ENCODE measurements at regions of chr2 and their contacts with region 1.

Region 1: GRCh38 chr2:42095923-42096408 is 48.1 kb downstream of the PKDCC start:
- DNase-seq: peak; percentile 88
- ATAC-seq: peak; percentile 68
- H3K4me3 Mint-ChIP-seq: no peak overlapping the region
- H3K27ac Mint-ChIP-seq: no peak overlapping the region
- H3K4me1 Mint-ChIP-seq: peaks cover 21% of the 10 kb centered on the region
- H3K27me3 Mint-ChIP-seq: no peaks in the 10 kb centered on the region
- CTCF ChIP-seq: peak; percentile 89

Region 2: GRCh38 chr2:42132966-42133641 is 37.1 kb after region 1 on chr2:
- CTCF ChIA-PET with region 1: interaction called, 18 read pairs
- POLR2A ChIA-PET with region 1: no interaction called
- intact Hi-C with region 1: no loop called
- DNase-seq: peak; percentile 97
- ATAC-seq: peak; percentile 91
- H3K4me3 Mint-ChIP-seq: peak overlapping the region; percentile 75
- H3K27ac Mint-ChIP-seq: peak overlapping the region; percentile 97
- H3K4me1 Mint-ChIP-seq: peaks cover 78% of the 10 kb centered on the region
- H3K27me3 Mint-ChIP-seq: no peaks in the 10 kb centered on the region
- CTCF ChIP-seq: no peak

Region 3: DNA sequence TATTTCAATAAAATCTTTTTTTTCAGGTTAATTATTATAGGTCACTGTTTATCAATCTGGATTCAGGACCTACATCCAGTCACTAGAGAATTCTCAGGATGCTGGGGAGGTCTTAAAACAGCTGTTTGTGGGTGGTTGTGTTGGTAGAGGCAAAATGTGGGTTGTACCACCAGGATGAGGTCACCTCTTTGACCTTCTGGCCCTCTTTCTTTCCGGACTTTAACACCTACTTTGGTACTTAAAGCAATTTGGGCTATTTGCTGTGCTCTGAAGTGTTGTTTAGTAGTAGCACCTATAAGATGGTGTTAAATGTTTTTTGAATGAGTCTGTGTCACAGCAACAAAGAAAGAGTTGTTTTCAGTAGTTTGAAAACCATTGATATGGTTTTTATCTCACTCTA is 87.8 kb after region 1 on chr2:
- CTCF ChIA-PET with region 1: interaction called, 13 read pairs
- POLR2A ChIA-PET with region 1: interaction called, 3 read pairs
- intact Hi-C with region 1: no loop called
- DNase-seq: no peak
- ATAC-seq: peak; percentile 56
- H3K4me3 Mint-ChIP-seq: no peak overlapping the region
- H3K27ac Mint-ChIP-seq: no peak overlapping the region
- H3K4me1 Mint-ChIP-seq: peaks cover 66% of the 10 kb centered on the region
- H3K27me3 Mint-ChIP-seq: no peaks in the 10 kb centered on the region
- CTCF ChIP-seq: no peak

Region 4: GRCh38 chr2:42196403-42197267 is 100.7 kb after region 1 on chr2:
- CTCF ChIA-PET with region 1: interaction called, 55 read pairs
- POLR2A ChIA-PET with region 1: interaction called, 3 read pairs
- intact Hi-C with region 1: loop called (anchors 2 kb)
- DNase-seq: peak; percentile 46
- ATAC-seq: peak; percentile 56
- H3K4me3 Mint-ChIP-seq: no peak overlapping the region
- H3K27ac Mint-ChIP-seq: peak overlapping the region; percentile 24
- H3K4me1 Mint-ChIP-seq: peaks cover 67% of the 10 kb centered on the region
- H3K27me3 Mint-ChIP-seq: no peaks in the 10 kb centered on the region
- CTCF ChIP-seq: peak; percentile 76

Region 5: DNA sequence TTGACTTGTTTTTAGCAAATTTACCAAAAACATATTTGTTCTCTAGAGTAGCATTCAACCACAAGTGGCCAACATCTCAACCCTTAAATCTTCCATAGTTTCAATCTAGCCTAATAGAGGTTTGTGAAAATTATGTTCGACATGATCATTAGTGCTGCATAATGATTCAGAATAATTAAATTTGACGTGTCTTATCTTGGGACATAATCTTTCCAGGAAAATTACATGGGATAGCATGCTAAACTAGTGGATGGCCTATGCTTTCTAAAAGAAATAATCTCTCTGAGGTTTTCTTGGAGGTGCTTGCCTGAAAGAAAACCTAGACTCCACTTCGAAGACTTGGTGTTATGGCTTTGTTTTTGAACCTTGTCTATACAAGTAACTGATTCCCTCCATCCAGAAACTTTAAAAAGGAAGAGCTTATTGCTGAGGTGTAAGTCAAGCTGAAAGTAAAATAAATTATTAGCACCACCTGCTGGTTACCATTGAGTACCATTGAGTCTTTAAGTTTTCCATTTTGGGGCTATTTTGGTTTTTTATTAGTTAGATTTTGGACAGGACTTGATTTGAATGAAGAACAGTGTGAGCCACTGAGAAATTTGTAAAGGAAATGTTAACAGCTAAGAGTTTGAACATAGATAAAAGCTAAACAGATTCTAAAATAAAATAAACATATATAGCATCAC is 232.3 kb after region 1 on chr2:
- CTCF ChIA-PET with region 1: interaction called, 44 read pairs
- POLR2A ChIA-PET with region 1: no interaction called
- intact Hi-C with region 1: loop called (anchors 10 kb)
- DNase-seq: no peak
- ATAC-seq: no peak
- H3K4me3 Mint-ChIP-seq: no peak overlapping the region
- H3K27ac Mint-ChIP-seq: peak overlapping the region; percentile 28
- H3K4me1 Mint-ChIP-seq: peaks cover 13% of the 10 kb centered on the region
- H3K27me3 Mint-ChIP-seq: no peaks in the 10 kb centered on the region
- CTCF ChIP-seq: peak; percentile 67